CD4-positive, alpha-beta memory T cell (primary cell): ENCODE measurements at regions of chr10 and their contacts with region 1.

Region 1: GRCh38 chr10:114470956-114471905 is 66.9 kb upstream of the AFAP1L2 start:
- DNase-seq: peak; percentile 65 to 67 (median 66)
- H3K4me3 ChIP-seq: no peak overlapping the region
- H3K4me3 Mint-ChIP-seq: peak overlapping the region in 1 of 8 donors; percentile 18
- H3K27ac ChIP-seq: no peak overlapping the region
- H3K27ac Mint-ChIP-seq: peak overlapping the region; percentile 22 to 76 (median 47)
- H3K4me1 ChIP-seq: peaks cover 5% of the 10 kb centered on the region
- H3K4me1 Mint-ChIP-seq: peaks cover 13 to 24% (median 18%) of the 10 kb centered on the region in 4 donors
- H3K27me3 ChIP-seq: no peaks in the 10 kb centered on the region
- H3K27me3 Mint-ChIP-seq: no peaks in the 10 kb centered on the region

Region 2: GRCh38 chr10:114271779-114272167 is 199.5 kb before region 1 on chr10:
- CTCF ChIA-PET with region 1: no interaction called
- POLR2A ChIA-PET with region 1: no interaction called
- intact Hi-C with region 1: no loop called
- DNase-seq: no peak
- H3K4me3 ChIP-seq: no peak overlapping the region
- H3K4me3 Mint-ChIP-seq: no peak overlapping the region
- H3K27ac ChIP-seq: no peak overlapping the region
- H3K27ac Mint-ChIP-seq: no peak overlapping the region
- H3K4me1 ChIP-seq: no peaks in the 10 kb centered on the region
- H3K4me1 Mint-ChIP-seq: no peaks in the 10 kb centered on the region
- H3K27me3 ChIP-seq: no peaks in the 10 kb centered on the region
- H3K27me3 Mint-ChIP-seq: peaks cover 5 to 11% of the 10 kb centered on the region in 2 donors

Region 3: GRCh38 chr10:114401195-114401791 is 69.9 kb before region 1 on chr10:
- CTCF ChIA-PET with region 1: no interaction called
- POLR2A ChIA-PET with region 1: no interaction called
- intact Hi-C with region 1: no loop called
- DNase-seq: no peak
- H3K4me3 ChIP-seq: no peak overlapping the region
- H3K4me3 Mint-ChIP-seq: no peak overlapping the region
- H3K27ac ChIP-seq: no peak overlapping the region
- H3K27ac Mint-ChIP-seq: no peak overlapping the region
- H3K4me1 ChIP-seq: no peaks in the 10 kb centered on the region
- H3K4me1 Mint-ChIP-seq: peaks cover 0 to 18% (median 11%) of the 10 kb centered on the region in 4 donors
- H3K27me3 ChIP-seq: no peaks in the 10 kb centered on the region
- H3K27me3 Mint-ChIP-seq: peaks cover 57 to 66% of the 10 kb centered on the region in 2 donors

Region 4: GRCh38 chr10:114453576-114453975 is 17.7 kb before region 1 on chr10:
- CTCF ChIA-PET with region 1: interaction called, 19 read pairs
- POLR2A ChIA-PET with region 1: no interaction called
- intact Hi-C with region 1: no loop called
- DNase-seq: no peak
- H3K4me3 ChIP-seq: no peak overlapping the region
- H3K4me3 Mint-ChIP-seq: no peak overlapping the region
- H3K27ac ChIP-seq: no peak overlapping the region
- H3K27ac Mint-ChIP-seq: peak overlapping the region in 2 of 7 donors; percentile 54 to 57
- H3K4me1 ChIP-seq: no peaks in the 10 kb centered on the region
- H3K4me1 Mint-ChIP-seq: peaks cover 4 to 15% (median 7%) of the 10 kb centered on the region in 4 donors
- H3K27me3 ChIP-seq: no peaks in the 10 kb centered on the region
- H3K27me3 Mint-ChIP-seq: no peaks in the 10 kb centered on the region

Region 5: DNA sequence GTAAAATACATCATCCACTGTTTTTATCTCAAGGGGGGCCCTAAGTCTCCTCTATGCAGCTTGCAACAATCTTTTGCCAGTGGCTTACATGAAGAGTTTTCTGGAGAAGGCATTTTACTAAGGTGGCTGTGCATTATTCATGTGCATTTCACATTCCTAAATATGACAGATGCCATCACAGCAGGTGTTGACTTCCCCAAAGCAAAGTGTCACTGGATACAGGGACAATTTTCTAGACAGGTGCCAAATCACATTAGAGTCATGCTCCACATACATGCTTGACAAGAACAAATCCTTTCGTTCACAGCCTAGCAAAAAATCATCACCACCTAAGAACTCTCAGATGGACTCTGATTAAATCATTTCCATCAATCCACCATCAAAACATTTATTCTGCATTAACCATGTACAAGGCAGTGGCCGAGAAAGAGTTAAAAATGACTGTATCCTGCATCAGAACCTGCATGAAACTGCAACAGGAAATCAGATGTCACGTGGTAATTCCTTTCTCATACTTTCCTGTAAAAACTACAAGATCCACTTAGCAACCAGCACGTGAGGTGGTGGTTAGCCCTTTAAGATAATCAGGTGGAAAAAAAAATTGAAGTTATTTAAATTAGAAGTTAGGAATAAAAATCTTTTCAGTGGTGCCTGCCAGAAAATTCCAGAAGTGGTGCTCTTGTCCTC is 21.3 kb after region 1 on chr10:
- CTCF ChIA-PET with region 1: interaction called, 17 read pairs
- POLR2A ChIA-PET with region 1: no interaction called
- intact Hi-C with region 1: no loop called
- DNase-seq: peak; percentile 20 to 54 (median 39)
- H3K4me3 ChIP-seq: no peak overlapping the region
- H3K4me3 Mint-ChIP-seq: peak overlapping the region in 7 of 8 donors; percentile 10 to 68 (median 59)
- H3K27ac ChIP-seq: no peak overlapping the region
- H3K27ac Mint-ChIP-seq: peak overlapping the region; percentile 15 to 84 (median 80)
- H3K4me1 ChIP-seq: peaks cover 53% of the 10 kb centered on the region
- H3K4me1 Mint-ChIP-seq: peaks cover 40 to 62% (median 54%) of the 10 kb centered on the region in 4 donors
- H3K27me3 ChIP-seq: no peaks in the 10 kb centered on the region
- H3K27me3 Mint-ChIP-seq: no peaks in the 10 kb centered on the region

Region 6: DNA sequence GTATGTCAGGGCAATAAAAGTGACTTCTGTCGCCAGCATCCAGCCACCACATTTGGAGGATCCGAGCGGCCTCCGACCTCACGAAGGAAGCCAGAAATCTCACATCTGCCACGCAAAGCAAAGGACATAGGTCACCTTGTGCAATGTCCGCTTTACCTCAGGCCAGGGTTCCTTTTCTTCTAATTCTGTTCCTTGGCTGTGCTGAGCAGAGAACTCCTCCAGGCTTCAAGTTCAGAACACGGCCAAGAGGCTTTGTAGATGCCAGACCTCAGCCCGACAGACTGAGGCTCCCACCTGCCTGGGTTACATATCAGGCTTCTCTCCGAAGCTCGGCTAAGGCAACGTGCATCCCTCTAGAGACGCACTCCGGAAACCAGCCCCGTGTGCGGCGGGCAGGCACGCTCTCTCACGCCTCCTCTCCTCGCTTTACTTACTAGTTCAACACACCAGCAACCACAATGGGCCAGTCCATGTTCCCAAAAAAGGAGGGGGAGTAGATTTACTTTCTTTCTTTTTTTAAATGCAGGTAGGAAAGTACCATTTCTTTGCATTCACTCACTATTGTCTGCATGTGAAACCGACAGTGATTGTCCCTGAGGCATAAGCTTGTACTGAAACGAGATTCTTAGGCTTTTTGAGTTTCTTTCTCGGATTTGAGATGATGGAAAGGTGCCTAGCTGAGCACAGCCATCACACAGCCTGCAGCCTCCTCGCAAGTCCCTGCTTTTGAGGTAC is 55.4 kb after region 1 on chr10:
- CTCF ChIA-PET with region 1: interaction called, 62 read pairs
- POLR2A ChIA-PET with region 1: interaction called, 18 read pairs
- intact Hi-C with region 1: loop called (anchors 1 kb)
- DNase-seq: peak; percentile 90 to 96 (median 94)
- H3K4me3 ChIP-seq: peak overlapping the region; percentile 78 to 82
- H3K4me3 Mint-ChIP-seq: peak overlapping the region; percentile 90 to 99 (median 96)
- H3K27ac ChIP-seq: peak overlapping the region; percentile 80
- H3K27ac Mint-ChIP-seq: peak overlapping the region; percentile 94 to 100 (median 99)
- H3K4me1 ChIP-seq: peaks cover 55% of the 10 kb centered on the region
- H3K4me1 Mint-ChIP-seq: peaks cover 32 to 68% (median 53%) of the 10 kb centered on the region in 4 donors
- H3K27me3 ChIP-seq: no peaks in the 10 kb centered on the region
- H3K27me3 Mint-ChIP-seq: no peaks in the 10 kb centered on the region

Region 7: GRCh38 chr10:114550756-114551635 is 79.8 kb after region 1 on chr10:
- CTCF ChIA-PET with region 1: interaction called, 241 read pairs
- POLR2A ChIA-PET with region 1: no interaction called
- intact Hi-C with region 1: loop called (anchors 1 kb)
- DNase-seq: peak in 3 of 5 donors; percentile 33 to 39 (median 37)
- H3K4me3 ChIP-seq: no peak overlapping the region
- H3K4me3 Mint-ChIP-seq: no peak overlapping the region
- H3K27ac ChIP-seq: no peak overlapping the region
- H3K27ac Mint-ChIP-seq: peak overlapping the region in 4 of 7 donors; percentile 4 to 83 (median 40)
- H3K4me1 ChIP-seq: peaks cover 33% of the 10 kb centered on the region
- H3K4me1 Mint-ChIP-seq: peaks cover 13 to 28% (median 20%) of the 10 kb centered on the region in 4 donors
- H3K27me3 ChIP-seq: no peaks in the 10 kb centered on the region
- H3K27me3 Mint-ChIP-seq: no peaks in the 10 kb centered on the region

Region 8: GRCh38 chr10:114779803-114780609 is 308.8 kb after region 1 on chr10:
- CTCF ChIA-PET with region 1: interaction called, 34 read pairs
- POLR2A ChIA-PET with region 1: no interaction called
- intact Hi-C with region 1: no loop called
- DNase-seq: no peak
- H3K4me3 ChIP-seq: no peak overlapping the region
- H3K4me3 Mint-ChIP-seq: no peak overlapping the region
- H3K27ac ChIP-seq: no peak overlapping the region
- H3K27ac Mint-ChIP-seq: no peak overlapping the region
- H3K4me1 ChIP-seq: no peaks in the 10 kb centered on the region
- H3K4me1 Mint-ChIP-seq: peaks cover 0 to 1% (median 0%) of the 10 kb centered on the region in 4 donors
- H3K27me3 ChIP-seq: peaks cover 4% of the 10 kb centered on the region
- H3K27me3 Mint-ChIP-seq: no peaks in the 10 kb centered on the region